CD8-positive, alpha-beta T cell (primary cell): ENCODE measurements at regions of chr10 and their contacts with region 1.

Region 1: DNA sequence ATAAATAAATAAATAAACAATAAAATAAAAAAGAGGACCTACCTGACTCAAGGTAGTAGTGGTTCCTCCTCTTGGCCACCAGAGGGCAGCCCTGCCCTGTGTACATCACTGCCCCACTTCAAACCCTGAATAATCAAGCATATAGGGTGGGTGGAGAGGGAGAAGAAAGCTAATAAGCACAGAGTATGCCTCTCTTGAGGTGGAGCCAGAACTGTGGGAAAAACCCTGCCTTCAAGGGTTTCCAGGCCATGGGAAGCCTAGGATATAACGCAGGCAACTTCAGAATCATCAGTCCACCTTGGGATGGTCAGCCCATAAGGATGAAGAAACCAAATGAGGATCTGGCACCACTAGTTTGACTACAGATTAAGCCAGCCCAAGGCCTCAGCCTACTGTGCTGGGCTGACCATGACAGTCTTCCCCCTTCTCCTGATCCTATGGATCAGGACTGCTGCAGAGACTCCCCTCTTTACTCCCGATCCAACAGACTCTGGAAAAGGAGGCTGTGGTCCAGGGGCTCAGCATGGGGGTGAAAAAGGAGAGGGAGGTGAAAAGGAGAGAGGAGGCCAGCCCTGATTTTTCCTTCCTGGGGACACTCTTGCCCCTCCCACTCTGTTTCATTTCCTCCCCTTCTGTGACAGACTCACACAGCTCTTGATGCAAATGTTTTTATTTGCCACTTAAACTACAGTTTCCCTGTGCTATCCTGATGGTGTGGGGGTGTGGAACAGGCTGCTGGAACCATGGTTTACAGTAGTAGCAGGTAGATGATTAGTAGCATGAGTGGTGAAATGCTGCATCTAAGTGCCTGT is 10.1 kb downstream of the AVPI1 start:
- DNase-seq: peak in 8 of 9 experiments; percentile 27 to 79 (median 56)
- ATAC-seq: peak; percentile 97
- H3K4me3 ChIP-seq: no peak overlapping the region
- H3K4me3 Mint-ChIP-seq: no peak overlapping the region
- H3K27ac ChIP-seq: no peak overlapping the region
- H3K27ac Mint-ChIP-seq: no peak overlapping the region
- H3K4me1 ChIP-seq: no peaks in the 10 kb centered on the region
- H3K4me1 Mint-ChIP-seq: no peaks in the 10 kb centered on the region
- H3K27me3 ChIP-seq: no peaks in the 10 kb centered on the region
- H3K27me3 Mint-ChIP-seq: no peaks in the 10 kb centered on the region
- CTCF ChIP-seq: peak; percentile 91

Region 2: DNA sequence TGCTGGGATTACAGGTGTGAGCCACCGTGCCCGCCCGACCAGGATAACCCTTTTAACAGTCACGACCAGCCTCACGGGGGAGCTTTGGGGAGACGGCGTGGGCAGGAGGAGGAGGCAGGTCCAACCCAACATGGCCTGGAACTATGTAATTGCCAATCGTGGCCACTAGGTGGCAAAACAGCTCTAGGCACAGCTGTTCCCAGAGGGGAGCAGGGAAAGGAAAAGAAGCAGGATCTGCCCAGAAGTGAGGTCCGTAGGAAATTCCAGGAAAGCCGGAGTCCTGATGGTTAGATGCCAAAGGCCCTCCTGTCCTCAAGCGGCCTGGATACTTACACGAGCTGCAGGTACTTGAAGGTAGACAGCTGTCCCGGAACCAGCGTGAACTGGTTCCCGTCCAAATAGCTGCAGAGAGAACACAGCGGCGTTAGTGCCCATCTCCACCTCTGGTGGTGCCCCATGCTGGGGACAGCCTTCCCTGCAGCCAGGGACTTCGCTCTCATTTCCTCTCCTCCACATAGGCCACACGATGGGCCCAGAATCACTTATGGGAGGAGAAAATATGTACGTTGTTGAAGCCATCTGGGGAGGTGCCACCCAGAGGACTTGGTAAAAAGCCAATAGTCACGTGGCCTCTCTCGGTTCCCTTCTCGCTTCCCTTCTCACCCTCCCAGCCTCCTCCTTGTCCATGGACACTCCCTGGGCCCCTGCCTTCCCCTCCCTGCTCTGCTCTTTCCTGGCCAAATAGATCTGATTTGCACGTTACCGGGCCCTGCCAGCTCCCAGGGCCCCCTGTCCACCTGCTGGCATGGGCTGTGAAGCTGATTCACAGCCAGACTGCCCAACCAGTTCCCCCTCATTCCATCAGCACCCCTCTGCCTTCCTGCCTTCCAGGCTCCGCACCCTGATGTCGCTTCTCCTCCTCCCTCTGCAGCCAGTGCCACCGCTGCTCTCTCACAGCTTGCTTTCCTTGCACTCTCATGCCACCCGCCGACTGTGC is 639.3 kb before region 1 on chr10:
- CTCF ChIA-PET with region 1: no interaction called
- POLR2A ChIA-PET with region 1: no interaction called
- intact Hi-C with region 1: no loop called
- DNase-seq: peak; percentile 35 to 81 (median 67)
- ATAC-seq: peak; percentile 92
- H3K4me3 ChIP-seq: peak overlapping the region; percentile 35 to 44
- H3K4me3 Mint-ChIP-seq: peak overlapping the region; percentile 73
- H3K27ac ChIP-seq: no peak overlapping the region
- H3K27ac Mint-ChIP-seq: no peak overlapping the region
- H3K4me1 ChIP-seq: no peaks in the 10 kb centered on the region
- H3K4me1 Mint-ChIP-seq: peaks cover 8% of the 10 kb centered on the region
- H3K27me3 ChIP-seq: no peaks in the 10 kb centered on the region
- H3K27me3 Mint-ChIP-seq: no peaks in the 10 kb centered on the region
- CTCF ChIP-seq: peak; percentile 92

Region 3: GRCh38 chr10:97564776-97565175 is 112.2 kb before region 1 on chr10:
- CTCF ChIA-PET with region 1: no interaction called
- POLR2A ChIA-PET with region 1: no interaction called
- intact Hi-C with region 1: no loop called
- DNase-seq: no peak
- ATAC-seq: no peak
- H3K4me3 ChIP-seq: no peak overlapping the region
- H3K4me3 Mint-ChIP-seq: no peak overlapping the region
- H3K27ac ChIP-seq: no peak overlapping the region
- H3K27ac Mint-ChIP-seq: no peak overlapping the region
- H3K4me1 ChIP-seq: no peaks in the 10 kb centered on the region
- H3K4me1 Mint-ChIP-seq: no peaks in the 10 kb centered on the region
- H3K27me3 ChIP-seq: no peaks in the 10 kb centered on the region
- H3K27me3 Mint-ChIP-seq: no peaks in the 10 kb centered on the region
- CTCF ChIP-seq: no peak

Region 4: GRCh38 chr10:97659589-97659988 is 17.4 kb before region 1 on chr10:
- CTCF ChIA-PET with region 1: interaction called, 14 read pairs
- POLR2A ChIA-PET with region 1: no interaction called
- intact Hi-C with region 1: no loop called
- DNase-seq: no peak
- ATAC-seq: no peak
- H3K4me3 ChIP-seq: no peak overlapping the region
- H3K4me3 Mint-ChIP-seq: no peak overlapping the region
- H3K27ac ChIP-seq: no peak overlapping the region
- H3K27ac Mint-ChIP-seq: no peak overlapping the region
- H3K4me1 ChIP-seq: no peaks in the 10 kb centered on the region
- H3K4me1 Mint-ChIP-seq: no peaks in the 10 kb centered on the region
- H3K27me3 ChIP-seq: no peaks in the 10 kb centered on the region
- H3K27me3 Mint-ChIP-seq: no peaks in the 10 kb centered on the region
- CTCF ChIP-seq: no peak

Region 5: GRCh38 chr10:97686962-97687784 is 10.2 kb after region 1 on chr10 and contains the start of gene AVPI1:
- CTCF ChIA-PET with region 1: interaction called, 42 read pairs
- POLR2A ChIA-PET with region 1: interaction called, 4 read pairs
- intact Hi-C with region 1: no loop called
- DNase-seq: peak; percentile 90 to 98 (median 96)
- ATAC-seq: peak; percentile 94
- H3K4me3 ChIP-seq: peak within 1 kb of the TSS; percentile 77 to 82
- H3K4me3 Mint-ChIP-seq: peak within 1 kb of the TSS; percentile 89
- H3K27ac ChIP-seq: peak within 1 kb of the TSS; percentile 47 to 64
- H3K27ac Mint-ChIP-seq: peak within 1 kb of the TSS; percentile 86
- H3K4me1 ChIP-seq: peaks cover 22% of the 10 kb centered on the region
- H3K4me1 Mint-ChIP-seq: peaks cover 23% of the 10 kb centered on the region
- H3K27me3 ChIP-seq: no peaks in the 10 kb centered on the region
- H3K27me3 Mint-ChIP-seq: peaks cover 4% of the 10 kb centered on the region
- CTCF ChIP-seq: no peak
- total RNA-seq, gene AVPI1: 13.7 TPM

Region 6: DNA sequence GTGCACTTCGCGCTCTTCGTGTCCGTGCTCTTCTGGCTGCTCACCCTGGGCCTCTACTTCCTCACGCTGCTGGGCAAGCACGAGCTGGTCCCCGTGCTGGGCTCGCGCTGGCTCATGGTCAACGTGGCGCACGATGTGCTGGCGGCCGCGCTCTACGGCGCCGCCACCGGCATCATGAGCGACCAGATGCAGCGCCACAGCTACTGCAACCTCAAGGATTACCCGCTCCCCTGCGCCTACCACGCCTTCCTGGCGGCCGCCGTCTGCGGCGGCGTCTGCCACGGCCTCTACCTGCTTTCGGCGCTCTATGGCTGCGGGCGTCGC is 37.0 kb after region 1 on chr10:
- CTCF ChIA-PET with region 1: interaction called, 8 read pairs
- POLR2A ChIA-PET with region 1: no interaction called
- intact Hi-C with region 1: loop called in 1 of 2 experiments (anchors 1 kb)
- DNase-seq: peak in 8 of 9 experiments; percentile 19 to 82 (median 59)
- ATAC-seq: peak; percentile 83
- H3K4me3 ChIP-seq: peak overlapping the region; percentile 57 to 63
- H3K4me3 Mint-ChIP-seq: peak overlapping the region; percentile 99
- H3K27ac ChIP-seq: no peak overlapping the region
- H3K27ac Mint-ChIP-seq: peak overlapping the region; percentile 82
- H3K4me1 ChIP-seq: peaks cover 9% of the 10 kb centered on the region
- H3K4me1 Mint-ChIP-seq: peaks cover 15% of the 10 kb centered on the region
- H3K27me3 ChIP-seq: peaks cover 0 to 3% of the 10 kb centered on the region in 2 experiments
- H3K27me3 Mint-ChIP-seq: peaks cover 17% of the 10 kb centered on the region
- CTCF ChIP-seq: no peak

Region 7: GRCh38 chr10:98045785-98046389 is 368.9 kb after region 1 on chr10:
- CTCF ChIA-PET with region 1: no interaction called
- POLR2A ChIA-PET with region 1: no interaction called
- intact Hi-C with region 1: loop called in 1 of 2 experiments (anchors 10 kb)
- DNase-seq: peak; percentile 21 to 76 (median 54)
- ATAC-seq: peak; percentile 72
- H3K4me3 ChIP-seq: no peak overlapping the region
- H3K4me3 Mint-ChIP-seq: no peak overlapping the region
- H3K27ac ChIP-seq: no peak overlapping the region
- H3K27ac Mint-ChIP-seq: no peak overlapping the region
- H3K4me1 ChIP-seq: peaks cover 6% of the 10 kb centered on the region
- H3K4me1 Mint-ChIP-seq: peaks cover 4% of the 10 kb centered on the region
- H3K27me3 ChIP-seq: peaks cover 3% of the 10 kb centered on the region in 2 experiments
- H3K27me3 Mint-ChIP-seq: peaks cover 30% of the 10 kb centered on the region
- CTCF ChIP-seq: peak; percentile 93